Mammary epithelial cell (primary cell): ENCODE measurements at regions of chr15 and their contacts with region 1.

Region 1: DNA sequence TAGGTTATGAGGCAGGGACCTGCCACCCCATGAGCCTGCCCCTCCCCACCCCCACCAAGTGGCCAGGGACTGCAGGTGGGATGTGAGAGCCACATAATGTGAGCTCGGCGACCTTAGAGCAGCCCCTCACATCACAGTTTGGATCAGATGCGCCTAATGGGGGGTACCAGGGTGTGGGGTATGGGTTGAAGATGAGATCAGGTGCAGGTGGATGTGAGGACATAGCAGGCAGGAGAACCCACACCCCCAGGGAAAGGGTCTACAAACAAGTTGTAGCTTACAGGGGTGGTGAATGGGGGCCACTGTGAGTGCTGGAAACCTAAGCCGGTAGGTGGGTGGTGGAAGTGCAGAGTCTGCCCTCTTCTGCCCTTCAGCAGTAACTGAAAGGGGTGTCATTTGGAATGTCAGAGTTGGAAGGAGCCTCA is 94.0 kb downstream of the CORO2B start:
- DNase-seq: no peak
- H3K4me3 ChIP-seq: no peak overlapping the region
- H3K27ac ChIP-seq: no peak overlapping the region
- H3K4me1 ChIP-seq: peaks cover 14% of the 10 kb centered on the region
- H3K27me3 ChIP-seq: no peaks in the 10 kb centered on the region
- CTCF ChIP-seq: peak; percentile 22 to 36

Region 2: DNA sequence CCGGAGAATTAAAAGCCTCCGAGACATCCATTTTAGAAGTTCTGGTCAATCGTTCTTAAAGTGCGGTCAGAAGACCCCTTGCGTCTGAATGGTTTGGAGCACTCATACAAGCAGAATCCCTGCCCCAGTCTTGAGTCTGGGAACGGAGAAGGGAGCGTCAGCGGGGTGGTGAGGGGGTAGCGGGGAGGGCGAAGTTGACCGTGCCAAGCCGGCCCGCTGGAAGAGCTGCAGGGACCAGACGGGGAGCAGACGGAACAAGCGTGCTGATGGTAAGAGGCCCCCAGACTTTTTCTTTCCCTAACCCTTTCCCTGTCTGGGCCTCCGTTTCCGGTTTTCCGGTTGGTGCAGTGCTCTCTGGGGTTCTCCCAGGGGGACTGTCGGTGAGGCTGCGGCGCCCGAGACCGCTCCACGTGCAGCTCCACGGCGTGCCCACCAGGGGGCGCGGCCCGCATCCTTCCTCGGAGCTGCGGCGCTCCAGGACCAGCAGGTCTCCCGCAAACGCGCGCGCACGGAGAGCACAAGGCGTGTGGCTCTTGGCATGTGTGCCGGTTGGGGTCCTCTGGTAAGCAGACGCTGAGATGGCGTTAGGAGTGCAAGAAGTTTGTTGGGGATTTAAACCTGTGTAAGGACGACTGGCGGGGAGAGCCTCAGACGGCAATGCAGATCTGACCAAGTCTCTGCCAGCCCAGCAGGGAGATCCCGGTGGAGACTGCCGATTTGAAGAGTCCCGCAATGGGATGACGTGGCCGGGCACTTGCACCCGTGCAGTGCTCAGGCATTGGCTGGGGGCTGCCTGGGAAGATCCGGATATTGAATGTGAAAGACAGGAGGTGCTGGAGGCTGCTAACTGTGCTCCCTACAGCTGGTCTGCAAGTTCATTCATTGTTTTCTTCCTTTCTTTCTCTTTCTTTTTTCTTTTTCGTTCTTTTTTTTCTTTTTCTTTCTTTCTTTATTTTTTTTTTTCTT is 113.2 kb before region 1 on chr15:
- CTCF ChIA-PET with region 1: interaction called, 31 read pairs
- dilution Hi-C with region 1: no loop called
- in situ Hi-C with region 1: loop called (anchors 5 kb)
- intact Hi-C with region 1: loop called (anchors 1 kb)
- DNase-seq: peak; percentile 57
- H3K4me3 ChIP-seq: peak overlapping the region; percentile 1 to 46 (median 38)
- H3K27ac ChIP-seq: no peak overlapping the region
- H3K4me1 ChIP-seq: peaks cover 20% of the 10 kb centered on the region
- H3K27me3 ChIP-seq: no peaks in the 10 kb centered on the region
- CTCF ChIP-seq: peak; percentile 72 to 96

Region 3: GRCh38 chr15:68578174-68578979 is 94.4 kb before region 1 on chr15:
- CTCF ChIA-PET with region 1: interaction called, 4 read pairs
- dilution Hi-C with region 1: no loop called
- in situ Hi-C with region 1: no loop called
- intact Hi-C with region 1: loop called (anchors 1 kb)
- DNase-seq: peak; percentile 33
- H3K4me3 ChIP-seq: peak overlapping the region; percentile 16 to 54 (median 47)
- H3K27ac ChIP-seq: no peak overlapping the region
- H3K4me1 ChIP-seq: peaks cover 21% of the 10 kb centered on the region
- H3K27me3 ChIP-seq: no peaks in the 10 kb centered on the region
- CTCF ChIP-seq: peak in 1 of 2 donors; percentile 45

Region 4: DNA sequence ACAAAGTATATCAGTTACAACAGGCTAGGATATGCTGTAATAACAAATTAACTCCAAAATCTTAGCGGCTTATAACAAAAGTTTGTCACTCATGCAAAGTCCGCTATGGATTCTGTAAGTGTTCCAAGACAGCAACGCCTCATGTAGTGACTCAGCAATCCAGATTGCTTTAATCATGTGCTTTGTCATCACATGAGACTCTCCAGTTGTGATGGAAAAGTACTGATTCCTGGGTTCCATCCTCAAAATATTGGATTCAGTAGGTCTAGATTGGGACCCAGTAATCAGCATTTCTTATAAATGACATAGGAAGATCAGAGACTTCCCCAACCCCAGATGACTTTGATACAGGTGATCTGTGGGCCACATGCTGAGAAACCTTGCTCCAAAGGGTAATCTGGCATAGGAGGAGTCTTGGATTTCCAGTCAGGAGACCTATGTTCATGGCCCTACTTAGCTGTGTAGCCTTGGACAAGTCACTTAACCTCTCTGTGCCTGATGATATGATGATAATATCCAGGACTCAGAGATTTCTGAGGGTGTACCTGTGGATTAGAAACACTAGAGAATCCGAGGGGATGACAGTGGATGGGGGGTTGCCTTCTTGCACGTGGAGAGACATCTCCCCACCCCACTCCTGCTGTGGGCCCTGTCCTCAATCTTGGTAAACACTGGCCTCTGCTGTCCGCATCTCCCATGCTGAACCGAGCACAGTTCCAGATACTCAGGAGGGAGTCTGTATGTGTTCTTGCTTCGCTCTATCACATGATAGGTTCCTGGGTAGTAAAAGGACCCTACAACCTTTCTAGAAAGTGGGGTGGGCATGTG is 28.5 kb before region 1 on chr15:
- CTCF ChIA-PET with region 1: no interaction called
- dilution Hi-C with region 1: no loop called
- in situ Hi-C with region 1: no loop called
- intact Hi-C with region 1: loop called (anchors 2 kb)
- DNase-seq: peak; percentile 62
- H3K4me3 ChIP-seq: no peak overlapping the region
- H3K27ac ChIP-seq: no peak overlapping the region
- H3K4me1 ChIP-seq: peaks cover 48% of the 10 kb centered on the region
- H3K27me3 ChIP-seq: no peaks in the 10 kb centered on the region
- CTCF ChIP-seq: peak in 1 of 2 donors; percentile 8

Region 5: GRCh38 chr15:68763063-68763462 is 90.3 kb after region 1 on chr15:
- CTCF ChIA-PET with region 1: no interaction called
- dilution Hi-C with region 1: no loop called
- in situ Hi-C with region 1: no loop called
- intact Hi-C with region 1: no loop called
- DNase-seq: no peak
- H3K4me3 ChIP-seq: no peak overlapping the region
- H3K27ac ChIP-seq: no peak overlapping the region
- H3K4me1 ChIP-seq: no peaks in the 10 kb centered on the region
- H3K27me3 ChIP-seq: no peaks in the 10 kb centered on the region
- CTCF ChIP-seq: no peak

Region 6: GRCh38 chr15:68820295-68821189 is 147.7 kb after region 1 on chr15 and contains the start of gene ANP32A:
- CTCF ChIA-PET with region 1: no interaction called
- dilution Hi-C with region 1: no loop called
- in situ Hi-C with region 1: no loop called
- intact Hi-C with region 1: no loop called
- DNase-seq: peak; percentile 96
- H3K4me3 ChIP-seq: peak within 1 kb of the TSS; percentile 78 to 95 (median 85)
- H3K27ac ChIP-seq: peak within 1 kb of the TSS; percentile 72
- H3K4me1 ChIP-seq: peaks cover 19% of the 10 kb centered on the region
- H3K27me3 ChIP-seq: no peaks in the 10 kb centered on the region
- CTCF ChIP-seq: no peak
- total RNA-seq, gene ANP32A: 42.5 to 109 TPM